Endothelial cell of umbilical vein (primary cell): ENCODE measurements at regions of chr1 and their contacts with region 1.

Region 1: GRCh38 chr1:110986407-110986891 is 22.7 kb upstream of the LRIF1 start:
- DNase-seq: no peak
- H3K4me3 ChIP-seq: no peak overlapping the region
- H3K27ac ChIP-seq: no peak overlapping the region
- H3K4me1 ChIP-seq: no peaks in the 10 kb centered on the region
- H3K27me3 ChIP-seq: no peaks in the 10 kb centered on the region
- CTCF ChIP-seq: no peak
- POLR2A ChIP-seq: no peak

Region 2: DNA sequence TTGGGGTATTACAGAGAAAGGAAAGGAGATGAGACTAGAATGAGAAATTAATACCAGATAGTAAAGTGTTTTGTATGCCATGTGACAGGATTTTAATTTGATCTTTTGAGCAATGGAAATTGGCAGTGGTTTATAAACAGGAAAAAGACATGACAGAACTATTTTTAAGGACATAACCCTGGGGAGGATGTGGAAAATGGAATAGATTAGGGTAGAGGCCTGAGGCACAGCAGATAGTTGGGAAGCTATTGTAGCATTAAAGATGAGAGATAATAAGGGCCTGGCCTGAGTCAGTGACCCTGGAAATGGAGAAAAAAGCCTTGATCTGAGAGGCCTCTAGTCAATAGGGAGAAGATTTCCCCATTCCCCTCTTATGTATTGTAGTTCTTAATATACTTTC is 289.6 kb before region 1 on chr1:
- CTCF ChIA-PET with region 1: no interaction called
- POLR2A ChIA-PET with region 1: no interaction called
- dilution Hi-C with region 1: no loop called
- intact Hi-C with region 1: no loop called
- DNase-seq: no peak
- H3K4me3 ChIP-seq: no peak overlapping the region
- H3K27ac ChIP-seq: no peak overlapping the region
- H3K4me1 ChIP-seq: no peaks in the 10 kb centered on the region
- H3K27me3 ChIP-seq: no peaks in the 10 kb centered on the region
- CTCF ChIP-seq: no peak
- POLR2A ChIP-seq: no peak

Region 3: DNA sequence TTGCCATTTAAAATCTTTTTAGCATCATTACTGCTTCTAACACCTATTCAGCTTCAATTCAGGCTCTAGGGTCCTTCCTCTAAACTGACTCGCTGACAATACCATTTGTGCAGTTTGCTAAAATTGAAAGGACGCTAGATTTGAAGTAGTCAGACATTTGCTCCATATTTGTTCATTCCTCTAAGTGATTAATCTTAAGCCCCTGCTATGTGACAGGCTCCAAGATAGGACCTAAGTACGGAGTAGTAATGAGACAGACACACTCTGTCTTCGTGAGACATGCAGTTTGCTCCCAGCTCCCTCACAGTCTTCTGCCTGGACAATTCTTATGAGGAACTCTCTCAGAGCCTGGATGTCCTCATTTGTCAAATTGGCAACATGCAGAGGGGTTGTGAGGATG is 139.6 kb before region 1 on chr1:
- CTCF ChIA-PET with region 1: no interaction called
- POLR2A ChIA-PET with region 1: no interaction called
- dilution Hi-C with region 1: no loop called
- intact Hi-C with region 1: loop called (anchors 10 kb)
- DNase-seq: no peak
- H3K4me3 ChIP-seq: no peak overlapping the region
- H3K27ac ChIP-seq: no peak overlapping the region
- H3K4me1 ChIP-seq: no peaks in the 10 kb centered on the region
- H3K27me3 ChIP-seq: no peaks in the 10 kb centered on the region
- CTCF ChIP-seq: no peak
- POLR2A ChIP-seq: no peak

Region 4: GRCh38 chr1:111015225-111015624 is 28.8 kb after region 1 on chr1:
- CTCF ChIA-PET with region 1: interaction called, 11 read pairs
- POLR2A ChIA-PET with region 1: no interaction called
- dilution Hi-C with region 1: no loop called
- intact Hi-C with region 1: no loop called
- DNase-seq: no peak
- H3K4me3 ChIP-seq: no peak overlapping the region
- H3K27ac ChIP-seq: no peak overlapping the region
- H3K4me1 ChIP-seq: no peaks in the 10 kb centered on the region
- H3K27me3 ChIP-seq: no peaks in the 10 kb centered on the region
- CTCF ChIP-seq: no peak
- POLR2A ChIP-seq: no peak

Region 5: DNA sequence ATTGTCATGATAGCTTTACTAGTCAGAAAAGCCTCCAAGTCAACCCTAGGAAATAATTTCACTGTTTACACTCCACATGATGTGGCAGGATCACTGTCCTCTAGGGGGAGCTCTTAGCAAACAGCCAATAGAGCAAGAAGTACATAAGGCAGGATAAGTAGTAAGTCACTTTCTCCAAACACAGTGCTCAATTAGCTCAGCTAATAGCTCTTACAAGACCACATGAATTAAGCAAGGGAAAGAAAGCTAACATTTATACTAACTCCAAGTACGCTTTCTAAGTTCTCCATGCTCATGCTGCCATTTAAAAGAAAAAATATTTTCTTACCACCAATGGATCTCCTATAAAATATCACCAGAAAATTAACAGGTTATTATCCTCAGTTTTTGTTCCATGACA is 44.1 kb after region 1 on chr1:
- CTCF ChIA-PET with region 1: interaction called, 21 read pairs
- POLR2A ChIA-PET with region 1: no interaction called
- dilution Hi-C with region 1: no loop called
- intact Hi-C with region 1: no loop called
- DNase-seq: peak; percentile 50
- H3K4me3 ChIP-seq: no peak overlapping the region
- H3K27ac ChIP-seq: no peak overlapping the region
- H3K4me1 ChIP-seq: no peaks in the 10 kb centered on the region
- H3K27me3 ChIP-seq: no peaks in the 10 kb centered on the region
- CTCF ChIP-seq: peak; percentile 70 to 72
- POLR2A ChIP-seq: no peak

Region 6: GRCh38 chr1:111139956-111140679 is 153.7 kb after region 1 on chr1 and contains the starts of genes CEPT1 and DRAM2:
- CTCF ChIA-PET with region 1: no interaction called
- POLR2A ChIA-PET with region 1: no interaction called
- dilution Hi-C with region 1: no loop called
- intact Hi-C with region 1: no loop called
- DNase-seq: peak; percentile 95
- H3K4me3 ChIP-seq: peak within 1 kb of the TSS; percentile 70 to 93 (median 88)
- H3K27ac ChIP-seq: peak within 1 kb of the TSS; percentile 83
- H3K4me1 ChIP-seq: peaks cover 18% of the 10 kb centered on the region
- H3K27me3 ChIP-seq: no peaks in the 10 kb centered on the region
- CTCF ChIP-seq: no peak
- POLR2A ChIP-seq: peak; percentile 89
- total RNA-seq, gene CEPT1: 27.9 and 29.1 TPM in 2 replicates
- total RNA-seq, gene DRAM2: 21.7 and 24.5 TPM in 2 replicates